B cell (primary cell): ENCODE measurements at regions of chr9 and their contacts with region 1.

Region 1: DNA sequence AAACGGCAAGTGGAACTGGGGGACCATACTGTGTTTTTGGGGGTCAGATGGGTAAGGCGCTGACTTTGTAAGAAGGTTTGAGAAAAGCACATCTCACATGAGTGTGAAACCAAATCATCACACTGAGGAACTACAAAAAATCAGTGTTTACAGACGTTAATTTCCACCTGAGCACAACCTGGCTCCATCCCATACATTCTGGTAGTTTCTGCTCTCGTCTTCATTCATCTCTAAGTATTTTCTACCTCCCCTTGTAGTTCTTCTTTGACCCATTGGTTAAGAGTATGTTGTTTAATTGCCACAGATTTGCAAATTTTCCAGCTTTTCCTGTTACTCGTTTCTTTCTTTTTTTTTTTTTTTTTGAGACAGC is 8.9 kb upstream of the DPP7 start:
- DNase-seq: no peak
- ATAC-seq: no peak
- H3K4me3 ChIP-seq: peak overlapping the region in 1 of 5 experiments; percentile 1
- H3K4me3 Mint-ChIP-seq: peak overlapping the region; percentile 72
- H3K27ac ChIP-seq: peak overlapping the region in 1 of 2 donors; percentile 84
- H3K27ac Mint-ChIP-seq: peak overlapping the region; percentile 89
- H3K4me1 ChIP-seq: peaks cover 53 to 64% of the 10 kb centered on the region in 2 donors
- H3K4me1 Mint-ChIP-seq: peaks cover 54% of the 10 kb centered on the region
- H3K27me3 ChIP-seq: no peaks in the 10 kb centered on the region
- H3K27me3 Mint-ChIP-seq: no peaks in the 10 kb centered on the region
- CTCF ChIP-seq: no peak

Region 2: DNA sequence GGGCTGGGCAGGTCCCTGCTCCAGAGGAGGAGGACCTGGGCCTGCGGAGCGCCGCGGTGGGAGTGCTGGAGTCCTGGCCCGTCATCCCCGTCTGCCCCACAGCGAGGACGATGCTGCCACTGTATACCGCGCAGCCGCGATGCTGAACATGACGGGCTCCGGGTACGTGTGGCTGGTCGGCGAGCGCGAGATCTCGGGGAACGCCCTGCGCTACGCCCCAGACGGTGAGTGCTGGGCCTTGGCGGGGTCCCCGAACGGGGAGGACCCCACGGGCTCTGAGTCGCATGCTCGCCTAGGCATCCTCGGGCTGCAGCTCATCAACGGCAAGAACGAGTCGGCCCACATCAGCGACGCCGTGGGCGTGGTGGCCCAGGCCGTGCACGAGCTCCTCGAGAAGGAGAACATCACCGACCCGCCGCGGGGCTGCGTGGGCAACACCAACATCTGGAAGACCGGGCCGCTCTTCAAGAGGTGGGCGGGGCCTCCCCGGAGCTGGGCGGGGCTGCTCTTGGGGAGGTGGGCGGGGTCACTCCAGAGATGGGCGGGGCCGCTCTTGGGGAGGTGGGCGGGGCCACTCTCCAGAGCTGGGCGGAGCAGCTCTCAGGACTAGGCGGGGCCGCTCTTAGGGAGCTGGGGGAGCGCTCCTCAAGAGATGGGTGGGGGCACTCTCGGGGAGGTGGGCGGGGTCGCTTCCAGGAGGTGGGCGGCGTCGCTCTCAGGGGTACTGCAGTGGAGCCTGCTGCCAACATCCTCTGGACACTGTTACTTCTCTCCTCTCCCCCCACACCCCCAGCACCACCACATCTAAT is 33.3 kb after region 1 on chr9:
- CTCF ChIA-PET with region 1: no interaction called
- POLR2A ChIA-PET with region 1: interaction called, 9 read pairs
- intact Hi-C with region 1: loop called (anchors 5 kb)
- DNase-seq: peak; percentile 76
- ATAC-seq: peak; percentile 79
- H3K4me3 ChIP-seq: peak overlapping the region in 3 of 5 experiments; percentile 33 to 51 (median 39)
- H3K4me3 Mint-ChIP-seq: peak overlapping the region; percentile 74
- H3K27ac ChIP-seq: no peak overlapping the region
- H3K27ac Mint-ChIP-seq: no peak overlapping the region
- H3K4me1 ChIP-seq: peaks cover 19 to 28% of the 10 kb centered on the region in 2 donors
- H3K4me1 Mint-ChIP-seq: peaks cover 26% of the 10 kb centered on the region
- H3K27me3 ChIP-seq: peaks cover 0 to 59% (median 18%) of the 10 kb centered on the region in 4 experiments
- H3K27me3 Mint-ChIP-seq: peaks cover 36% of the 10 kb centered on the region
- CTCF ChIP-seq: no peak